WTC11 (cell line): ENCODE measurements at regions of chr2 and their contacts with region 1.

Region 1: GRCh38 chr2:43131024-43131889 is 95.1 kb downstream of the ZFP36L2 start:
- DNase-seq: peak; percentile 62
- ATAC-seq: peak; percentile 26
- H3K4me3 Mint-ChIP-seq: no peak overlapping the region
- H3K27ac Mint-ChIP-seq: no peak overlapping the region
- H3K4me1 Mint-ChIP-seq: peaks cover 35% of the 10 kb centered on the region
- H3K27me3 Mint-ChIP-seq: no peaks in the 10 kb centered on the region; the same call in 1 of the 2 replicates
- CTCF ChIP-seq: no peak

Region 2: GRCh38 chr2:42961385-42961811 is 169.9 kb before region 1 on chr2:
- CTCF ChIA-PET with region 1: no interaction called
- POLR2A ChIA-PET with region 1: no interaction called
- DNase-seq: no peak
- ATAC-seq: peak; percentile 29
- H3K4me3 Mint-ChIP-seq: no peak overlapping the region
- H3K27ac Mint-ChIP-seq: no peak overlapping the region; the same call in 1 of the 2 replicates
- H3K4me1 Mint-ChIP-seq: peaks cover 43% of the 10 kb centered on the region
- H3K27me3 Mint-ChIP-seq: no peaks in the 10 kb centered on the region
- CTCF ChIP-seq: no peak

Region 3: GRCh38 chr2:43100883-43101662 is 30.2 kb before region 1 on chr2:
- CTCF ChIA-PET with region 1: interaction called, 17 read pairs
- POLR2A ChIA-PET with region 1: interaction called, 5 read pairs
- DNase-seq: peak; percentile 73
- ATAC-seq: peak; percentile 61
- H3K4me3 Mint-ChIP-seq: peak overlapping the region; percentile 63
- H3K27ac Mint-ChIP-seq: no peak overlapping the region
- H3K4me1 Mint-ChIP-seq: peaks cover 27% of the 10 kb centered on the region
- H3K27me3 Mint-ChIP-seq: peaks cover 34% of the 10 kb centered on the region
- CTCF ChIP-seq: no peak

Region 4: DNA sequence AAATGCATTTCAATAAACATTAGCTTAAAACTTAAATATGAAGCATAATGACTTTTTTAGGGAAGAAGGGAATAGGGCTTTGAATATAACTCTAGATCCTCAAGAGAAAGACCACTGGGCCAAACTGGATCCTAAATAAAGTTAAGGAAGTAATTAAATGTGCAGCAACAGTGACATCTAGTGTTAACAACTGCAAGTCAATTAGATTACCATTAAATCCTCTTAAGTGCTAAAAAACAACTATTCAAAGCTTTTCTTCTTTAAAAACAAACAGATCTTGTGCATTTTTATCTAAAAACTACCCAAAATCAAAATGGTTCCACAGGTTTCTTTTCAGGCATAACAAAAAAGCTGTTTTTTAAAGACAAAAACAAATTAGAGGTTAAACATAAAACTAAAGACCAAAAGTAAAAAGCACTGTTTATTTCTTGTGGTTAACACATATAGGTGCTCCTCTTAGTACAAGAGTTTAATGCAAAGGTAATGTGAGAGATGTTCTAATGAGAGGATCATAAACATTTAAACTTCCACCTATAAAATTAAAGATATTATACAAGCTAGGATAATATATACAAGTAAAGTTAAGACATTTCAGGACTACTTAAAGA is 353.2 kb after region 1 on chr2:
- CTCF ChIA-PET with region 1: interaction called, 12 read pairs
- POLR2A ChIA-PET with region 1: no interaction called
- DNase-seq: no peak
- ATAC-seq: peak; percentile 72
- H3K4me3 Mint-ChIP-seq: no peak overlapping the region
- H3K27ac Mint-ChIP-seq: no peak overlapping the region
- H3K4me1 Mint-ChIP-seq: 0 out of 2 replicates have a peak, but pooled peaks cover 3% of the 10 kb centered on the region
- H3K27me3 Mint-ChIP-seq: no peaks in the 10 kb centered on the region
- CTCF ChIP-seq: peak; percentile 30; the same call in 1 of the 2 replicates